ENCODE measurements at regions of chr1 and their contacts with region 1.

Region 1: GRCh38 chr1:206734499-206735142 is 36.0 kb upstream of the IL19 start:
- DNase-seq: no peak
- H3K4me3 ChIP-seq: no peak overlapping the region
- H3K27me3 ChIP-seq: no peaks in the 10 kb centered on the region
- CTCF ChIP-seq: peak; percentile 88

Region 2: DNA sequence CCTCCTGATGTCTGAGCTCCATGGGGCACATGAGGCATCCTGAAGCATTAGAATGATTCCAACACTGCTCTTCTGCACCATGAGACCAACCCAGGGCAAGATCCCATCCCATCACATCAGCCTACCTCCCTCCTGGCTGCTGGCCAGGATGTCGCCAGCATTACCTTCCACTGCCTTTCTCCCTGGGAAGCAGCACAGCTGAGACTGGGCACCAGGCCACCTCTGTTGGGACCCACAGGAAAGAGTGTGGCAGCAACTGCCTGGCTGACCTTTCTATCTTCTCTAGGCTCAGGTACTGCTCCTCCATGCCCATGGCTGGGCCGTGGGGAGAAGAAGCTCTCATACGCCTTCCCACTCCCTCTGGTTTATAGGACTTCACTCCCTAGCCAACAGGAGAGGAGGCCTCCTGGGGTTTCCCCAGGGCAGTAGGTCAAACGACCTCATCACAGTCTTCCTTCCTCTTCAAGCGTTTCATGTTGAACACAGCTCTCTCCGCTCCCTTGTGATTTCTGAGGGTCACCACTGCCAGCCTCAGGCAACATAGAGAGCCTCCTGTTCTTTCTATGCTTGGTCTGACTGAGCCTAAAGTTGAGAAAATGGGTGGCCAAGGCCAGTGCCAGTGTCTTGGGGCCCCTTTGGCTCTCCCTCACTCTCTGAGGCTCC is 238.4 kb before region 1 on chr1:
- CTCF ChIA-PET with region 1: no interaction called
- POLR2A ChIA-PET with region 1: no interaction called
- DNase-seq: no peak
- H3K4me3 ChIP-seq: no peak overlapping the region
- H3K27me3 ChIP-seq: no peaks in the 10 kb centered on the region
- CTCF ChIP-seq: no peak

Region 3: GRCh38 chr1:206744683-206745082 is 10.1 kb after region 1 on chr1:
- CTCF ChIA-PET with region 1: interaction called, 11 read pairs
- POLR2A ChIA-PET with region 1: no interaction called
- DNase-seq: no peak
- H3K4me3 ChIP-seq: no peak overlapping the region
- H3K27me3 ChIP-seq: no peaks in the 10 kb centered on the region
- CTCF ChIP-seq: no peak

Region 4: DNA sequence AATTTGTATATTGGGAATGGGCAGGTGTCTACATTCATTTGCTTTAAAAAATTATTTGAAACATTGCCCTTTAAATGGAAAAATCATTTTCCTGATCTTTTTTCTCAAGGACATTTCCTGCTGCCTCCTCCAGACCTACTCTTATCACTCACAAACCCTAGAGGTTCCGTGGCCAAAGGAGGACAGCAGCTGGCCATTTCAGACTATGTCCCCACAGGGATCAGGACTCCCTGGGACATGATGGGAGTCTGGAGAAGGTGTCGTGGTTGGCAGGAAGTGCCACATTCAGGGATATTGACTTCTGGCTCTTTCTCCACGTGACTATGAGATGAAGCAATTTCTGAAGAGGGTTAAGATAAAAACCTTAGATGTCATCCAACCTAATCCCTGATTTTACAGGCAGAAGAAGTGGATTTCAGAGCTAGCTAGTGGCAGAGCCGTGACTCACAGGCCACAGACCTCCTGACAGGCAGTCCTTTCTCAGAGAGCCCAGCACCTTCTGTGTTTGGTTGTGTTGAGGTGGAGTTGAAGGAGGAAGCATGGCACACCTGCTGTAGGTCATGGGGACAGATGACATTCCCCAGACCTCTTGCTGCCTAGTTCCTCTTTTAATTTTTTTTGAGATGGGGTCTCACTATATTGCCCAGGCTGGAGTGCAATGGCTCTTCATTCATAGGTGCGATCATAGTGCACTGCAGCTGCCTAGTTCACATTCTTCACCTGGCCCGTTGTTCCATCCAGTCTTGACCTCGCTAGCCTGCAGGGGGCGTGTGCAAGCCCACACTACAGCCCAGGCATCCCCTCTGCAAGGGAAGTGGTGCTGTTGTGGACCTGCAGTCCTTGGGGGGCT is 63.1 kb after region 1 on chr1:
- CTCF ChIA-PET with region 1: interaction called, 101 read pairs
- POLR2A ChIA-PET with region 1: no interaction called
- DNase-seq: no peak
- H3K4me3 ChIP-seq: no peak overlapping the region
- H3K27me3 ChIP-seq: no peaks in the 10 kb centered on the region
- CTCF ChIP-seq: peak; percentile 43

Region 5: DNA sequence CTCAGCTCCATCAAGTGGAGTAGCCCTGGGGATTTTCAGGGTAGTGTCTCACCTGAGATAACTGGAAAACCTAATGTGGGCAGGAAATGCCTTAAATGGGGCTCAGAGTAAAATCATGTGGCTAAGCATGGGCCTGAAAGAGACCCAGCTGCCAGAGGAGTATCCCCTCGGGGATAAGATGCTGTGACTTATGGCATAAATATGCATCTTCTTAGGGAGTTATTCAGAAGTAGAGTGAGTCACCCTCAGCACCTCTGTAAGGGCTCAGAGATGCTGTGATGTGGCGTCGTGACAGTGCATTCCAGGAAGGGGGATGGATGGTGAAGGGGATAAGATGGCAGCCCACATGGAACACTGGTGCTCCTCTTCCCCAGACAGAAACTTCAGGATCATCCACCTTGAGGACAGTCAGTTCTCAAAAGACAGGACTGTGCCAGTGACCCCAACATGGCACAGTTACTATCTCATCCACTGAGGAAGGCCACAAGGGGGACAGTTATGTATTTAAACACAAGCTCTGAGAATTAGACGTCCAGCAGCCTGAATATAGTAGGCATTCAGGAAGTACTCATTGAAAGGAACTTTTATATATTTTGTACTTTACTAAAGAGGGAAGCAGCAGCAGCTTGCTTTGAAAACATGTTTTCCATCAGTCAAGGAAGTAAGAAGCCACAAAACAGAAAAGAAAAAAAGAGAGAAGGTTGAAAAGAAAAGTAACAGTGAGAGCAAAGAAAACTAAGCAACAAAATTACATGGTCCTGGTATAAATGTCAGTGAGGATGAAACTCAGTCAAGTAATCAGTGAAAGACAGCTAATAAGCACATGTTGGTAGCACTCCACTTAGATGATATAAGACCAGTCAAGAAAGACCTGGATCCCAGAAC is 170.9 kb after region 1 on chr1:
- CTCF ChIA-PET with region 1: interaction called, 21 read pairs
- POLR2A ChIA-PET with region 1: no interaction called
- DNase-seq: peak; percentile 83
- H3K4me3 ChIP-seq: no peak overlapping the region
- H3K27me3 ChIP-seq: no peaks in the 10 kb centered on the region
- CTCF ChIP-seq: peak; percentile 10; the same call in 1 of the 2 replicates

Region 6: DNA sequence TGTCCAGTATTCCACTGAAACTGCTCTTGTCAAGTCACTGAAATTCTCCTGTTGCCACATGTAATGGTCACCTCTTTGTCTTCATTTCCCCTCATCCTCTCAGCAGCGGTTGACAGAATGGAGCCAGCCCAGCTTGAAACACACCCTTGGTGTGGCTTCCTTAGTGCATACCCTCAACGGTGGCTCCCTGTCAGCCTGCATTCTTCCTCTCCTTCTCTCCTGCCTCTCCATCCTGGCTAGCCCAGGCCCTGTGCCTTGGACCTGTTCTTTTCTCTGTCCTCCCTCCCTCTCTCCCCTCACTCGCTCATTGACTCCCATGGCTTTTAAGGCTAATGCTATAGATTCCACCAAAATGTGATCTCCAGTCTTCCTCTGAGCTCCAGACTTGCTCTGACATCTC is 183.5 kb after region 1 on chr1:
- CTCF ChIA-PET with region 1: interaction called, 56 read pairs
- POLR2A ChIA-PET with region 1: no interaction called
- DNase-seq: no peak
- H3K4me3 ChIP-seq: no peak overlapping the region
- H3K27me3 ChIP-seq: peaks cover 4% of the 10 kb centered on the region
- CTCF ChIP-seq: no peak

Measured in BJ (cell line).